Cardiac septum (tissue), 1 donor: ENCODE measurements at regions of chr22 and their contacts with region 1.

Region 1: GRCh38 chr22:27581688-27582087 is 219.9 kb downstream of the MN1 start:
- DNase-seq: peak; percentile 81

Region 2: GRCh38 chr22:27212617-27213177 is 369.0 kb before region 1 on chr22:
- intact Hi-C with region 1: loop called (anchors 10 kb)
- DNase-seq: no peak

Region 3: GRCh38 chr22:27512283-27512761 is 69.4 kb before region 1 on chr22:
- intact Hi-C with region 1: loop called (anchors 2 kb)
- DNase-seq: peak; percentile 76